HCT116 (cell line): ENCODE measurements at regions of chr4 and their contacts with region 1.

Region 1: GRCh38 chr4:168153596-168154440 is 61.5 kb downstream of the ANXA10 start:
- DNase-seq: peak; percentile 74
- ATAC-seq: peak; percentile 83
- H3K4me3 ChIP-seq: no peak overlapping the region
- H3K27ac ChIP-seq: peak overlapping the region; percentile 67
- H3K4me1 ChIP-seq: peaks cover 3 to 8% of the 10 kb centered on the region in 2 experiments; a peak in 2 of 4 replicates
- H3K27me3 ChIP-seq: no peaks in the 10 kb centered on the region
- CTCF ChIP-seq: peak; percentile 55 to 78 (median 70)
- POLR2A ChIP-seq: no peak
- RAD21 ChIP-seq: peak; percentile 92

Region 2: DNA sequence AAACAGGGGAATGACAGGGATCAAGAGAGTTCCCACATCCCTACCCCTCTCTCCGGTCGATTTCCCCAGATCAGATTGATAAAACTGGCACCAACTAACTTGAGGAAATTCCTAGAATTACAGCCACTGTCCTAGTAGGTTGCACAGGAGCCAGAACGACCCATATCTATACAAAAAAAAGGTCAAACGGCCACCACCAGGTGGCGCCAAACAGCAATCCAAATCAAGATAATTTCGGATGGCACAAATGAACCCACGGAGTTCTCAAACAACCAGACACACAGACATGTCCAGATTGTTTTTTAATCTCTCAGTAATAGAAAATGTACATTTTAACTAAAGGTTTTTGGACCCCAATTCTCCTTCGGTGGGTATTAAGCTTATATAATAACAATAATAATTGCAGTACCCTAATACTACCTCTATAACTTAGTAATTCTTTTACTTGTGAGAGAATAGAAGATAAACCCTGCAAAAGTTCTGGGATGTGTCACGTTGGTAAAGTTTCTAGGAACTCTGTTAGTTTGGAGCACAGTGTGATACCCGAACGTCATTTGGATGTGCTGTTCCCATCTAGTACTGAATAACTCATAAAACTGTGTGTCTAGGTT is 1132.2 kb before region 1 on chr4:
- CTCF ChIA-PET with region 1: no interaction called
- POLR2A ChIA-PET with region 1: no interaction called
- RAD21 ChIA-PET with region 1: no interaction called
- intact Hi-C with region 1: loop called (anchors 5 kb)
- DNase-seq: peak; percentile 66
- ATAC-seq: peak; percentile 94
- H3K4me3 ChIP-seq: no peak overlapping the region
- H3K27ac ChIP-seq: no peak overlapping the region
- H3K4me1 ChIP-seq: no peaks in the 10 kb centered on the region; a peak in 1 of 4 replicates
- H3K27me3 ChIP-seq: no peaks in the 10 kb centered on the region
- CTCF ChIP-seq: peak; percentile 60 to 87 (median 65); a peak in 5 of 6 replicates
- POLR2A ChIP-seq: no peak
- RAD21 ChIP-seq: peak; percentile 84

Region 3: GRCh38 chr4:167443841-167444240 is 710.0 kb before region 1 on chr4:
- CTCF ChIA-PET with region 1: no interaction called
- POLR2A ChIA-PET with region 1: no interaction called
- RAD21 ChIA-PET with region 1: no interaction called
- intact Hi-C with region 1: loop called (anchors 10 kb)
- DNase-seq: no peak
- ATAC-seq: no peak
- H3K4me3 ChIP-seq: no peak overlapping the region
- H3K27ac ChIP-seq: no peak overlapping the region
- H3K4me1 ChIP-seq: no peaks in the 10 kb centered on the region
- H3K27me3 ChIP-seq: no peaks in the 10 kb centered on the region
- CTCF ChIP-seq: no peak
- POLR2A ChIP-seq: no peak
- RAD21 ChIP-seq: no peak

Region 4: DNA sequence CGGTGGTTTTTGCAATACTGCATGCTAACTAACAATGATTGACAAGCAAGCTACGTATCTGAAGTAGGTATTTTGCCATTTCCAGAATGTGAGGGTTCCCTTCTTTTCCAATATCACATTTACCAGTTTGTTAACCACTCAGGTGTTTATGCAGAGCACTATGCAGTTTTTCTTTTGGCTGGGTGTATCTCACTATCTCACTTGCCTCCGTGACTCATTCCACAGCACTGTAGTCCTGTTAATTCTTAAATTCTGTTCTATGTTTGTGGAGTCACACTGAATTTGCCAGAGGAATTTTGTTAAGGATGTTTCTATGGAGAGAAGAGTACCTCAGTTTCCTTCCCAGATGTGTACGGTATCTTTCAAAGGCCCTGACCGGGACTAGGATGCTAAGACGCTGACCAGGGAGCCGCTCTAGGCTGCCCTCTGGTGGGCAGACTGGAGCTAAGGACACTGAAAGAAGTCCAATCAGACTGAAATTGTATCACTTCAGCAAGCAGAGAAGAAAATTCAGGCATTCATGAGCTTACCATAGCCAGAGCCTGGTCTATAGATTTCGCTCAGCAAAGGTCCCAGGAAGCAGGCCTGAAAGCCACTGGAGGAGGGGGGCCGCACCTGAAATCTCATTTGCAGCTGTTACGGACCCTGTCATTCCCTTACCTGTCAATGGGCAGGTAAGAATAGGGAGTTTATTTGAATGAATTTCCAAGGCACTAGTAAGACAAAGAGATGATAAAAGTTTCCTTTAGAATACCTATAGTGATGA is 531.2 kb before region 1 on chr4:
- CTCF ChIA-PET with region 1: interaction called, 9 read pairs
- POLR2A ChIA-PET with region 1: no interaction called
- RAD21 ChIA-PET with region 1: interaction called in 1 of 2 experiments, 4 read pairs
- intact Hi-C with region 1: loop called (anchors 5 kb)
- DNase-seq: peak; percentile 46
- ATAC-seq: peak; percentile 99
- H3K4me3 ChIP-seq: no peak overlapping the region
- H3K27ac ChIP-seq: no peak overlapping the region
- H3K4me1 ChIP-seq: no peaks in the 10 kb centered on the region
- H3K27me3 ChIP-seq: no peaks in the 10 kb centered on the region
- CTCF ChIP-seq: peak; percentile 46 to 89 (median 84); a peak in 5 of 6 replicates
- POLR2A ChIP-seq: no peak
- RAD21 ChIP-seq: peak; percentile 73

Region 5: DNA sequence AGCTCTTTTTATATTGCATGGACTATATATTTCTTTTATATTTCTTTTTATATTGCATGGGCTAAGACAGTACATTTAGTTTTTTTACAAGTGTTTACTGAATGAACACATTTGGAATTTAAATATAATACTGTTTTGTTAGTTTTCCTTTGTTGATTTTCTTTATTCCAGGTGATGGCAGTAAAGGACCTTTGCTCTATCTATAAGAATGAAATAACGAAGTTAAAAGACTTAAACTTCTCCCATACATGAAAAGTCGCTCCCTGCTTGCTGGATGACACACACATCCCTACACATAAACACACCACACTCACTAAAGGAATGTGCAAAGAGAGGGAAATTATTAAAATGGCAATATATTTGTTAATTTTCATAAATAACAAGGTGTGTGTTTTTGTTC is 164.0 kb before region 1 on chr4:
- CTCF ChIA-PET with region 1: interaction called, 24 read pairs
- POLR2A ChIA-PET with region 1: no interaction called
- RAD21 ChIA-PET with region 1: interaction called in 1 of 2 experiments, 3 read pairs
- intact Hi-C with region 1: loop called (anchors 2 kb)
- DNase-seq: peak; percentile 4
- ATAC-seq: peak; percentile 38; the same call in 1 of the 2 replicates
- H3K4me3 ChIP-seq: no peak overlapping the region
- H3K27ac ChIP-seq: no peak overlapping the region
- H3K4me1 ChIP-seq: no peaks in the 10 kb centered on the region
- H3K27me3 ChIP-seq: no peaks in the 10 kb centered on the region
- CTCF ChIP-seq: peak in 2 of 3 experiments; percentile 30 to 57; a peak in 2 of 6 replicates
- POLR2A ChIP-seq: no peak
- RAD21 ChIP-seq: peak; percentile 68

Region 6: DNA sequence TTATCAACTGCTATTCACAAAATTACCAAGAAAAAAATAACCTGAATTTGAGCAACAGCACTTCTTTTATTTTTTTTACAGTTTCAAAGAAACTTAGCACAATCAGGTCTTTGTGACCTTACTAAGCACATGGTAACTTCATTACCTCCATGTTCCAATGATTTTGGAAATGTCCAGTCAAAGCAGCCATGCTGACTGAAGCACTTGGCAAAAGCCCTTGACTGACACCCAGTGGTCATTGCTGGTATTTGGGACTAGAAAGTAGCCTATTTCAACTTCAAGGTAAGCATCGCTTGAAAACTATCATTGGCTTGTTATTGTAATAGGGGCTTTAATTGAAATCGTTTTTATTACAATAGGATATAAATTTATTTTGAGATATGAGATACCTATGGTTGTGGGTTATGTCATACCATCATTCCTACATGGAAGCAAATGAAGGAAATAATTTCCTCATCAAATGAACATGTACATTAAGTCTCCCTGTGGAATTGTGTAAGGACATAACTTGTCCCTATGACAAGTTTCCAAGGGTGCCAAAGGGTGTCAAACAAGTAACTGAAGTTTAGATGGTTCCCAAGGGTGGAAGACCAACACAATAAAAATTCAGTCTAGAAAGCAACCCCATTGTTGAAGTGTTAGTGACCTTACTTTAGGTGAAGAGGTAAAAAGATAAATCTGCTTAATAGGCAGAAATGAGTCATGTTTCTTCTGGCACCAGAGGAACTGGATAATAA is 76.7 kb before region 1 on chr4:
- CTCF ChIA-PET with region 1: interaction called, 5 read pairs
- POLR2A ChIA-PET with region 1: interaction called, 4 read pairs
- RAD21 ChIA-PET with region 1: no interaction called
- intact Hi-C with region 1: loop called (anchors 5 kb)
- DNase-seq: peak; percentile 88
- ATAC-seq: peak; percentile 78
- H3K4me3 ChIP-seq: no peak overlapping the region
- H3K27ac ChIP-seq: peak overlapping the region; percentile 85
- H3K4me1 ChIP-seq: peaks cover 7 to 21% of the 10 kb centered on the region in 2 experiments
- H3K27me3 ChIP-seq: no peaks in the 10 kb centered on the region
- CTCF ChIP-seq: peak; percentile 74 to 93 (median 91); a peak in 5 of 6 replicates
- POLR2A ChIP-seq: no peak
- RAD21 ChIP-seq: peak; percentile 96

Region 7: DNA sequence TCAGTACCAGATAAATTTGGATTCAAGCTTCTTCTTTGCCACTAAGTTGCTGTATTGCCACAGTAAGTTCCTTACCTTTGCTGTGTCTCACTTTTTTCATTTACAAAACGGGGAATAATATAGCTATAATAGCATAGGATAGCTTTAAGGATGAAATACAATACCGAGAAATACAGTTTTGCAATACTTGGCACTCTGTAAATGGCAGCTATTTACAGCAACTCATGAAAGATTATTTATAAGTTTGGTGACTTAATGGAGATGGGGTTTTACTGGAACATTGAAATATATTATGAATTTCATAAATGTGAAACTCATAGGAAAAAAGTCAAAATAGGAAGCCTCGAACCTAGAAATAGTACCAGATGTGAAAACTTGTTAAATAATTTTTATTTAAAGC is 33.9 kb before region 1 on chr4:
- CTCF ChIA-PET with region 1: no interaction called
- POLR2A ChIA-PET with region 1: no interaction called
- RAD21 ChIA-PET with region 1: no interaction called
- intact Hi-C with region 1: no loop called
- DNase-seq: no peak
- ATAC-seq: no peak
- H3K4me3 ChIP-seq: no peak overlapping the region
- H3K27ac ChIP-seq: no peak overlapping the region
- H3K4me1 ChIP-seq: no peaks in the 10 kb centered on the region
- H3K27me3 ChIP-seq: no peaks in the 10 kb centered on the region
- CTCF ChIP-seq: no peak
- POLR2A ChIP-seq: no peak
- RAD21 ChIP-seq: no peak

Region 8: DNA sequence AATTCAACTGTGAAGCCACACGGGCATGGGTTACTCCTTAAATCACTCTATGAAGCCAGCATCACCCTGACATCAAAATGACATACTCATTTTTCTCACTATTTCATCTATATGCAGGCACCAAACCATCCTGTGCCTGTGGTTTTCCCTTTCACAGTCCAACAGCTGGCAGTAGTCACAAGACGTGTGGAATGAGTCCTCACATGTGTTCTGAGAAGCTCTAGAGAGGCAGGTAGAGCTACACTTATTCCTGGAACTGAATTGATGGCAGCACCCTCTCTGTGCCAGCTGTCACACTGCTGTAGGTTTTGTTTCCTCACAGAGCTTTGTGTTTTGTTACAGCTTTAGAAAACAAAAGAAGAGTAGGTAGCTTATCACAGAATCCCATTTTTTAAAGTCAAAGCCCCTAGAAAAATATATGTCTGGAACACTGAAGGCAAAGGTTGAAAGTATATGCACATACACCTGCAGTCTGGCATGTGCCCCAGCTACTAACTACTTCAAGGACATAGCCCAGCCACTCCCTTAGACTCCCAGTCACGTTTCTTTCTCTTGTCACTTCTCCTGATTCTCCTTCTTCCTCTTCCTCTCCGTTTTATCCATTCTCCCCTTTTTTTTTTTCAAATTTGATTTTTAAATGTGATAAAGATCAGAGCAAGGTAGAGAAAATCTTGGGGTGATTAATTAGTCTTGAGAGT is 45.6 kb after region 1 on chr4:
- CTCF ChIA-PET with region 1: no interaction called
- POLR2A ChIA-PET with region 1: no interaction called
- RAD21 ChIA-PET with region 1: no interaction called
- intact Hi-C with region 1: no loop called
- DNase-seq: no peak
- ATAC-seq: no peak
- H3K4me3 ChIP-seq: no peak overlapping the region
- H3K27ac ChIP-seq: no peak overlapping the region
- H3K4me1 ChIP-seq: no peaks in the 10 kb centered on the region
- H3K27me3 ChIP-seq: no peaks in the 10 kb centered on the region
- CTCF ChIP-seq: no peak
- POLR2A ChIP-seq: no peak
- RAD21 ChIP-seq: no peak